ENCODE measurements at regions of chr1 and their contacts with region 1.

Region 1: DNA sequence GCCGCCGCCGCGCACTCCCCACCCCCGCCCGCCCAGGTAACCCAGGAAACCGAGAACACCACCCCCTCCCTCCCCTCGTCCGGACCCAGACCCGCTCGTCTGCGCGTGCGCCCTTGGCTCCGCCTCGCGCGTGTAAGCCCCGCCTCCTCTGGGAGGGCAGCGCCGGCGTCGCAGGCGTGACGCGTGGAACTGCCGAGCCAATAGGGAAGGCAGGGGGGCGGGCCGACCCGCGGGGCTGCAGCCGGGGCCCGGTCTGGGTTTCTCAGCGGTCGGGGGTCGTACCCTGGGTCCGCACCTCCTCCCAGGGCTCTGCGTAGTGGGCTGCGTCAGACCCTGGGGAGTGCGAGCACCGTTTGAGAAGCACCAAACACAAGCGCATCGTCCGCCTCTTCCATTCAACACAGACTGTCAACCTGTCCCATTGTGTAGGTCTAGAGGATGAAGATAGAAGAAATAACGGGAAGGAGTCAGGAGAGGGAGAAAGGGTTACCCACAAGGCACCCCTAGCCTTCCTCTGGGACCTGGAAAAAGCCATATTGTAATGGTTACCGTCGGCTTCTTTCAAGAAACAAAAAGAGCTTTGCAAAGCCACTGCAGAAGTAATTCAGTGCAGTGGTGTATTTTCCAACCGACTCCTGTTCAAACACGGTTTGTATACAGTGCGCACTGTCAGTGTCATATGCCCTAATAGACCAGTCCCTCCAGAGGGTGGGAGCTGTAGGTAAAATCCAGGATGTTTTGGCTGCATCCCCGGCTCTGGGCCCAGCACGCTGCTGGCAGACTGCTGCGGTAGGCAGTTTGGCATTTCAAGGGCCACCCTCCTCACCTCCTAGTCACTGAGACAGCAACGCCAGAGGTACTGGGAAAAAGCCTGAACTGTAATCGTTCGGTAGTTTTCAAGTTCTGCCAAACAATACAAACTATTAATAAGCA is 473 bp upstream of the LYST start:
- DNase-seq: peak; percentile 77 to 99
- H3K4me3 ChIP-seq: peak overlapping the region; percentile 88
- H3K27ac ChIP-seq: peak overlapping the region; percentile 6; the same call in 1 of the 2 replicates
- H3K4me1 ChIP-seq: peaks cover 19% of the 10 kb centered on the region
- H3K27me3 ChIP-seq: no peaks in the 10 kb centered on the region
- CTCF ChIP-seq: no peak

Region 2: DNA sequence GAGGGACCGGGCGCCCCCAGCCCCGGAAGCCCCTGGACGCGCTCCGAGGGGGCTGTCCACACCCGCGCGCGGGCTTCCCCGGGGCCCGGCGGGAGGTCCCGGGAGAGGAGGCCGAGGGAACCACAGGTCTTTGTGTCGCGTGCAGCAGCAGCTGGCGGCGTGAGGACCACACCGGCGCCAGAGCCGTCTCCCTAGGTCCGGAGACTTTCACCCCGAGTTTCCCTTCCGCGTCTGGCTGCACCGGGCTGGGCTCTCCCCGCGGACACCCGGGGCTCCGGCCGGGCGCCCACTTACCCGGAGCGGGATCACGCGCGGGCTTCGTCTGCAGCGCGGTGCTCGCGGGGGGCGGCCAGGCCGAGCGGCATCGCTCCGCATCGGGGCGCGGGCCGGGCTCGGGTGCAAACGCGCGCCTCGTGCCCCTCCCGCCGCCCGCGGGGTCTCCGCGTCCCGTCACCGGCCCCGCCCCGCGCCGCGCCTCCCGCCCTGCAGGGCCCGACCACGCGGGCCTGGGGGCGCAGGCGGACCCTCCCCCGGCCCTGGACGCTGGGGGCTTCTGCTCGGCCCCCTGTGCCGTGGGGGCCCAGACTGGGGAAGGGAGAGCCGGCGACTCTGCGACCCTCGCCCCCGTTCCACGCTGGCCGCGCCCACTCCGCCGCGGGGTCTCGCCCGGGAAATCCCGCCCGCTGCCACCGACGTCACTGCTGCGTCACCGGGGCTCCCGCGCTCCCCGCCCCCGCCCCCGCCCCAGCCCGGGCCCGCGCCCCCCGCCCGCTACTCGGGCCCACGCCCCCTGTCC is 217.6 kb before region 1 on chr1 and contains the start of gene GNG4:
- CTCF ChIA-PET with region 1: no interaction called
- POLR2A ChIA-PET with region 1: no interaction called
- intact Hi-C with region 1: no loop called
- DNase-seq: peak in 1 of 2 experiments; percentile 34
- H3K4me3 ChIP-seq: peak within 1 kb of the TSS; percentile 76
- H3K27ac ChIP-seq: no peak within 1 kb of the TSS
- H3K4me1 ChIP-seq: peaks cover 4% of the 10 kb centered on the region; the same call in 1 of the 2 replicates
- H3K27me3 ChIP-seq: no peaks in the 10 kb centered on the region
- CTCF ChIP-seq: no peak
- total RNA-seq, gene GNG4: 15.5 and 16.3 TPM in 2 replicates

Region 3: DNA sequence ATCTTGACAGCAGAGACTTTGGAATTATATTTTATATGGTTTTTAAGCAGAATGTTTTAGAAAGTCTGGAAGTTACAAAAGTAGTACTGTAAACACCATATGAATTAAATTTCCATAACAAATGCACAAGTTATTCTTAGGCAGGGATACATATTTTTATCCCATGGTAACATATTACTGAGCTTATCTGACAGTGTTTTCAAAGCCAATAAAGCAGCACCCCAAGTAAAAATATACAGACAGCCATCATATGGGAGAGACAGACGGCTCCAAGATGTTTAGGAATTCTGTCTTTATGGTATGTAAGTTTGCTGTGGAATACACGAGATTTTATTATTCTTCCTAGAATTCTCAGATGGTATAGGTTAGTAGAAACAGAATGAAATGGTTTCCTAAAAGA is 205.6 kb before region 1 on chr1:
- CTCF ChIA-PET with region 1: no interaction called
- POLR2A ChIA-PET with region 1: no interaction called
- intact Hi-C with region 1: no loop called
- DNase-seq: no peak
- H3K4me3 ChIP-seq: no peak overlapping the region
- H3K27ac ChIP-seq: no peak overlapping the region
- H3K4me1 ChIP-seq: no peaks in the 10 kb centered on the region
- H3K27me3 ChIP-seq: no peaks in the 10 kb centered on the region
- CTCF ChIP-seq: no peak

Region 4: GRCh38 chr1:235888119-235888643 is 21.0 kb after region 1 on chr1:
- CTCF ChIA-PET with region 1: no interaction called
- POLR2A ChIA-PET with region 1: no interaction called
- intact Hi-C with region 1: no loop called
- DNase-seq: no peak
- H3K4me3 ChIP-seq: no peak overlapping the region
- H3K27ac ChIP-seq: no peak overlapping the region
- H3K4me1 ChIP-seq: peaks cover 12% of the 10 kb centered on the region
- H3K27me3 ChIP-seq: no peaks in the 10 kb centered on the region
- CTCF ChIP-seq: no peak

Region 5: DNA sequence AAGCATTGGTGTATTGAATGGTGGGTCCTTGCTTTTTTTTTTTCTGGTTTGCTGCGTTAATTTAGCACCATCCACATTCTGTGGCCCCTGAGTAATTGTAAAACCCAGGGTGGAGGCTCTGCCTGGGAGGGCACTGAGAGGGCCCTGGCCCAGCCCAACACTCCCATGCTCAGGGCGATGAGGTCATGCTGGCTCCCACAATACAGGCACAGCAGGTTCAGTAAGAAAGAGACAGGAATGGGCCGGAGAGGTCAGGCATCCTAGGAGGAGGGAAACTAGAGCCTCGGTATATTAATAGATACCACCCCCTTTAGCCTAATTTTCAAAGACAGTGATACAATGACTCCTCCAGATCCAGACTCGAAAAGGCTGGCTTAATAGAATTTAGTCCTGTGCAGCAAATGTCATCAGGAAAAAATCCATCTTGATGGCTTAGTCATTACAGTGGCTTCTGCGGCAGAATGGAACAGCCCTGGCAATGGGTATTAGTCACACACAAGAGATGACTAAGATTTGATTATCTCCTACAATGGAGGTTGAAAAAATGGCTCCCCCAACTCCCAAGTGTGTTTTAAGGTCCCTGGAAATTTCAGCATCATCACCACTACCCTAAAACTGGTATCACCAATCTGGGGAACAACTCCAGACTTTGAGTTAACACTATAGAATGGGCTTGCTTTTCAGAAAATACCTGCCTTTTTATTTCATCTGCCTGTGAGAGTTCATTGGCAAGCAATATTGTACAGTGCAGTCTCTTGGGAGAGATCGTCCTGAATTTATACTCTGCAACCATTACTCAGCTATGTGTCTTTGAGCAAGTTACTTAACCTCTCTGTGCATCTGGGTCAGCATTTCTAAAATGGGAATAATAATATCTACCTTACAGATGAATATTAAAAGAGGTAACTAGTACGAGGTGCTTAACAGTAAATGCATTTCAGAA is 43.4 kb after region 1 on chr1:
- CTCF ChIA-PET with region 1: interaction called, 4 read pairs
- POLR2A ChIA-PET with region 1: no interaction called
- intact Hi-C with region 1: loop called (anchors 1 kb)
- DNase-seq: peak; percentile 93 to 97
- H3K4me3 ChIP-seq: peak overlapping the region; percentile 45; the same call in 1 of the 2 replicates
- H3K27ac ChIP-seq: peak overlapping the region; percentile 99
- H3K4me1 ChIP-seq: peaks cover 78% of the 10 kb centered on the region
- H3K27me3 ChIP-seq: no peaks in the 10 kb centered on the region
- CTCF ChIP-seq: no peak

Region 6: DNA sequence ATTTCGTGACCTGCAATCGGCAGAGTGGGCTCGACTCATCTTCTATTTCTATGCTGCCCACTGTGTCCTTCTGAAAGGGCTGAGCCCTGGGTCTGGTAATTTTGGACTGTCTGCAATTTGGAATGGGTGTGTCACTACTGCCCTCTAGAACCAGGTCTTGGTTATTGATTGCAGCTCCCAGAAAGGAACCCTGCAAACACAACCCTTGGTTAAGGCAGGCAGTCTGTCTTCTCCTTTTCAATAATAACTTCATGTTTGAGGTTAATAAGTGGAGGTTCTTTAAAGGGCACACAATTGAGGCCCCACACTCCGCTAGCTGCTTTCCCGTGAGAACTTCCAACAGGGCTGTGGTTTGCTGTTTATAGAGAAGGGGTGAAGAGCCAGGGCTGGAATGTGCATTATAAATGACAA is 79.4 kb after region 1 on chr1:
- CTCF ChIA-PET with region 1: interaction called, 3 read pairs
- POLR2A ChIA-PET with region 1: interaction called, 3 read pairs
- intact Hi-C with region 1: loop called (anchors 1 kb)
- DNase-seq: no peak
- H3K4me3 ChIP-seq: no peak overlapping the region
- H3K27ac ChIP-seq: no peak overlapping the region
- H3K4me1 ChIP-seq: peaks cover 13% of the 10 kb centered on the region; the same call in 1 of the 2 replicates
- H3K27me3 ChIP-seq: no peaks in the 10 kb centered on the region
- CTCF ChIP-seq: peak; percentile 66; the same call in 1 of the 2 replicates

Region 7: DNA sequence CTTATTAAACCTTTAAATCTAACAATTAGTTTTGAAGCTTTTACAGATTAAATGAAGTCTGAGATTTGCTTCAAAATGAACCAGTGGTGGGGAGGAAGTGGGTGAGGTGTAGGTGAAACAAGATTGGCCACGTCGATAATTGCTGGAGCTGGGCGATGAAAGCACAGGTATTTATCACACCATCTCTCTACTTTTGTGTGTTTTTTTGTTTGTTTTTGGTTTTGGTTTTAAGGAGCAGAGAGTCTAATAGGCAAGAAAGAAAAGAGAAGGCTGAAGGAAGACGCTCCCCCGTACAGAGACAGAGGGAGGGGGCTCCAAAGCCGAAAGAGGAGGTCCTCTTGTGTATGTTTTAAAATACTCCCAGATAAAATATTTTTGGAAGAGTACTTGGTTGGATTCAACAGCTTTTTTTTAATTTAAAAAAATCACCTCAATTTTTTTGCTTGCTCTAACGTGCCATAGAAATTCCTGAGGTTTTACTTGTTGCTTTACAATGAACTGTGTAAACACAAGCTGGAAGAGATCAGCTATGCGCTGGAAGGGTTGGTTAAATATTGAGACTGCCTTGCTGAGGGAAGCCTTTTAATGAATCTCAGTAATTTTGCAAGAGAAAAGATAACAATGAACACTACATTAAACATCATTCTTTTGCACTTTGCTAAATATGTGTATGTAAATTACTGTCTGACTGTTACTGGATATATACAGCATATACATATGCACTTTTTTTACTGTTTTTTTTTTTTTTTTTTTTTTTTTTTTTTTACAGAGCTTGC is 649.9 kb after region 1 on chr1:
- CTCF ChIA-PET with region 1: no interaction called
- POLR2A ChIA-PET with region 1: interaction called, 14 read pairs
- intact Hi-C with region 1: no loop called
- DNase-seq: peak; percentile 38 to 97
- H3K4me3 ChIP-seq: peak overlapping the region; percentile 42; the same call in 1 of the 2 replicates
- H3K27ac ChIP-seq: peak overlapping the region; percentile 93
- H3K4me1 ChIP-seq: peaks cover 50% of the 10 kb centered on the region
- H3K27me3 ChIP-seq: no peaks in the 10 kb centered on the region
- CTCF ChIP-seq: no peak

Measured in PC-9 (cell line).